Dendritic cell treated with granulocyte-macrophage colony-stimulating factor and Interleukin-4, amounts not matched to agents 40 ng/mL and 50 ng/mL, for 4 days (primary cell): ENCODE measurements at regions of chr1 and their contacts with region 1.

Region 1: GRCh38 chr1:48498096-48498791 is 26.2 kb upstream of the SPATA6 start:
- H3K4me3 Mint-ChIP-seq: peak overlapping the region; percentile 14
- H3K27ac Mint-ChIP-seq: no peak overlapping the region
- H3K4me1 Mint-ChIP-seq: peaks cover 5% of the 10 kb centered on the region
- H3K27me3 Mint-ChIP-seq: no peaks in the 10 kb centered on the region

Region 2: GRCh38 chr1:48109390-48110013 is 388.7 kb before region 1 on chr1:
- intact Hi-C with region 1: loop called (anchors 5 kb)
- H3K4me3 Mint-ChIP-seq: no peak overlapping the region
- H3K27ac Mint-ChIP-seq: no peak overlapping the region
- H3K4me1 Mint-ChIP-seq: no peaks in the 10 kb centered on the region
- H3K27me3 Mint-ChIP-seq: peaks cover 24% of the 10 kb centered on the region

Region 3: DNA sequence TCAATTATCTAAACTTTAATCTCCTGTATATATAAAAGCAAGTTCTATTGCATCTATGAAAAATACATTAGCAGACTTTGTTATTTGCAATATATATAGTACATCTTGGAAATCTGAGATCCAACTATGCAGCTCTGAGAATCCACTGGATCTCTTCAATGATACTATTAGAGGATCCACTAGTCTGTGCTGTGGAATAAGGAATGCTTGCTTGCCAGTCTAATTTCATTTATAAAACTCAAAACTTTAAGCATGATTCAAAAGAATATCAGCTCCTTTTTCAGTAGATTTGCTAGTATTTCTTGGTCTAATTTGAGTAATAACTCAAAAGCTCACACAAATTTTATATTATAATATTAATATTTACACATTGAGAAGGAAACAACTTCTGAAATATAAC is 141.3 kb before region 1 on chr1:
- intact Hi-C with region 1: loop called (anchors 5 kb)
- H3K4me3 Mint-ChIP-seq: no peak overlapping the region
- H3K27ac Mint-ChIP-seq: no peak overlapping the region
- H3K4me1 Mint-ChIP-seq: no peaks in the 10 kb centered on the region
- H3K27me3 Mint-ChIP-seq: no peaks in the 10 kb centered on the region

Region 4: DNA sequence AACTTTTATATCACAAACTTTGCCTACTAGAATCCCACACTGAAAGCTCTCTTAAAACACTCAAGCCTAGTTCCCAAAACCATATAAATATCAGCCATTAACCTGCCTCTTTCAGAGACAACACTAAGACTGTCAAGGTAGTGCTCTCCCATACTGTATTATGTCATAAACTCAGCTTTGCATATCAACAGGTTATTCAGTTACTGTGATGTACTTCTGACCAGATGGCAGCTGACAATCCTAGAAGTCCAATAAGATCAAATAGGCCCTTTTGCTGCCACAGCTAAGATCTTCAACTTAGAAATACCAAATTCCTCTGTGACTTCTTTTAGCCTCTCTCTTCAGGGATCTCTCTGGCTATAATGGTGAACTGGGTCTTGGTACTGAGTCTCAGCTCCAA is 123.5 kb before region 1 on chr1:
- intact Hi-C with region 1: no loop called
- H3K4me3 Mint-ChIP-seq: no peak overlapping the region
- H3K27ac Mint-ChIP-seq: no peak overlapping the region
- H3K4me1 Mint-ChIP-seq: no peaks in the 10 kb centered on the region
- H3K27me3 Mint-ChIP-seq: no peaks in the 10 kb centered on the region

Region 5: GRCh38 chr1:48450505-48450904 is 47.7 kb before region 1 on chr1:
- intact Hi-C with region 1: loop called (anchors 5 kb)
- H3K4me3 Mint-ChIP-seq: no peak overlapping the region
- H3K27ac Mint-ChIP-seq: no peak overlapping the region
- H3K4me1 Mint-ChIP-seq: peaks cover 9% of the 10 kb centered on the region
- H3K27me3 Mint-ChIP-seq: no peaks in the 10 kb centered on the region

Region 6: DNA sequence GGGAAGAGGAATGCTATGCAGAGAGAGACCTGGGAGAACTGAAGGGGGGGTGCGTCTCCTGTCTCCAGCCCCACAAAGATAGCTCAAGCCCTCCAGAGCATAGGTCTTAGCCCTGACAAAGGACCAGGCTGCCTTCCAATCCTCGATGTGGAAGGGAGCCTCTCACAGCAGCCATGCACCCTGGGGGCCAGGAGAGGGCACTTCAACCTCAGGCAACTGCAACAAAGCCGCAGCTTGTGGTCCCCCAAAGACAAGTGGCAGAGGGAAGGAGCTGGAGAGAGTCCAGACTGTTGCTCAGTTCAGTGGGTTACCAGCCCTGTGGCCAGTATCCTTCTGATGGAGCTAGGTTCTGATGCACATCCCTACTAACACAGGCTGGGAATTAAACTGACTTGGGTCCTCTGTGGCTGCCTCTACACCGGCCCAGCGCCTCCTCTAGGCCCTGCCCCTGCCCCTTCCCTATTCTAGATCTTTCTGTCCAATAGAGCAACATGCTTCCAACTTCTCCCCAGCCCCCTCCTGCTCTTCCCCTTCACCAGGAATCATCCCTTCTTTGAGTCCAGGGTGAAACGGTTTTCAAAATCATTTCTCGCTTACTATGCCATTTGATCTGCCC is 74.5 kb after region 1 on chr1:
- intact Hi-C with region 1: no loop called
- H3K4me3 Mint-ChIP-seq: no peak overlapping the region
- H3K27ac Mint-ChIP-seq: no peak overlapping the region
- H3K4me1 Mint-ChIP-seq: peaks cover 17% of the 10 kb centered on the region
- H3K27me3 Mint-ChIP-seq: peaks cover 8% of the 10 kb centered on the region